MCF 10A (cell line): ENCODE measurements at regions of chr17 and their contacts with region 1.

Region 1: GRCh38 chr17:42773290-42774035 is at the start of gene VPS25:
- DNase-seq: peak; percentile 84
- H3K4me3 Mint-ChIP-seq: peak within 1 kb of the TSS; percentile 87
- H3K27ac Mint-ChIP-seq: peak within 1 kb of the TSS; percentile 89
- H3K4me1 Mint-ChIP-seq: peaks cover 8% of the 10 kb centered on the region
- H3K27me3 Mint-ChIP-seq: no peaks in the 10 kb centered on the region
- CTCF ChIP-seq: no peak
- total RNA-seq, gene VPS25: 84.3 and 96.0 TPM in 2 replicates

Region 2: GRCh38 chr17:42561908-42562844 is 211.3 kb before region 1 on chr17 and contains the start of gene COASY:
- CTCF ChIA-PET with region 1: no interaction called
- POLR2A ChIA-PET with region 1: no interaction called
- intact Hi-C with region 1: no loop called
- DNase-seq: peak; percentile 97
- H3K4me3 Mint-ChIP-seq: peak within 1 kb of the TSS; percentile 94
- H3K27ac Mint-ChIP-seq: peak within 1 kb of the TSS; percentile 96
- H3K4me1 Mint-ChIP-seq: peaks cover 19% of the 10 kb centered on the region
- H3K27me3 Mint-ChIP-seq: no peaks in the 10 kb centered on the region
- CTCF ChIP-seq: no peak
- total RNA-seq, gene COASY: 82.6 and 89.2 TPM in 2 replicates

Region 3: DNA sequence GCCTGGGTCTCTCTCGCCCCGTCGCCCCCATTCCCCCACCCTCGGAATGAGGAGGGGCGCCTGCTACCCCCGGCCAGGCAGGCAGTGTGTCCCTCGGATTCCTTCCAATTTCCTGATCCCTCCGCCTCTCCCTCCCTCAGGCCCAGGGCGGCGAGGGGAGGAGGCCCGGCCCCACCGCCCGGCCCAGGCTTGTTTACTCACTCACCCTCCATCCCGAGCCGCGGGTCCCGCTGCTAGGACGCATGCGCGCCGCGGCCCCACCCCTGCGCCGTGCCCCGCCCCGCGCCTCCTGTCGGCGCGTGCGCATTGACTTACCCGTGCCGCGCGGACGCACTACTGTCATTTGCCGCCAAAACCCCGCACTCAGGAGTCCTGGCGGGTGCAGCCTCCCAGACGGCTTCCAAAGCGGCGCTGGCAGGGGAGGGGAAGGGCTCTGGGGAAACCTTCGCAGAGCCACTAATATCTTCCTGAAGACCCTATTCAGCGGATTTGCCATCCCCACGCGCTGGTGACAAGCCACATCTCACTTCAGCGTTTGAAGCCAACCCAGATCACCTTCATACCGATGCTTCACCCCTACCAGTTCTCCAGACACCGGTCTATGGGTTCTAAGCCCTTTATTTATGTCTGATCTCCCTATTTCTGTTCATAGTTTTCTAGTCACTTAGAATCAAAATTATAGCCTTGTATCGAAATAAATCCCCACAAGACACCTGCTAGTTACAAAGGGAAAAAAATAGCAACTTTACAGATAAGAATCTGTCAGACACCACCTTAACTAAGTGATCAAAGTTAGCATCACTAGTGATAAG is 28.5 kb before region 1 on chr17 and contains the start of gene EZH1:
- CTCF ChIA-PET with region 1: no interaction called
- POLR2A ChIA-PET with region 1: interaction called, 10 read pairs
- intact Hi-C with region 1: no loop called
- DNase-seq: peak; percentile 90
- H3K4me3 Mint-ChIP-seq: peak within 1 kb of the TSS; percentile 91
- H3K27ac Mint-ChIP-seq: peak within 1 kb of the TSS; percentile 96
- H3K4me1 Mint-ChIP-seq: peaks cover 10% of the 10 kb centered on the region
- H3K27me3 Mint-ChIP-seq: no peaks in the 10 kb centered on the region
- CTCF ChIP-seq: no peak
- total RNA-seq, gene EZH1: 31.1 and 31.7 TPM in 2 replicates

Region 4: DNA sequence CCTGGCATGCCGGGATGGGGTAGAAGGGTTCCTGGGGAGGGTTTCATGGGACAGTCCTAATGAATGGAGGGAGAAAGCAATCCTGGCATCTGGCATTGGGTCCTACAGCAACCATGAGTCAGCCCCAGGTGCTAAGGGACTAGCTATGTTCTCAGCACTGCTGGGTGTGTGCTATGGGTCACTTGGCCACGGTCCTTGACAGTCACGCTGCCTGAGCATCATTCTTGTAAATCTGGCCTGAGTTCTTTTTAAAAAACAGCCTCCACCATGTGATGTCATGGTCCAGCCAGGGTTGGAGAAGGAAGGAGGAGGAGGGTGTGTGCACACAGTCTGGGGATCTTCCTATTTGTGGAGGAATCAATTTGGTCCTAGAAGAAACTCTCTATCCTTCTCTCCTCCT is 18.7 kb before region 1 on chr17:
- CTCF ChIA-PET with region 1: interaction called, 3 read pairs
- POLR2A ChIA-PET with region 1: interaction called, 10 read pairs
- intact Hi-C with region 1: no loop called
- DNase-seq: peak; percentile 42
- H3K4me3 Mint-ChIP-seq: no peak overlapping the region
- H3K27ac Mint-ChIP-seq: no peak overlapping the region
- H3K4me1 Mint-ChIP-seq: peaks cover 7% of the 10 kb centered on the region
- H3K27me3 Mint-ChIP-seq: peaks cover 11% of the 10 kb centered on the region
- CTCF ChIP-seq: no peak

Region 5: DNA sequence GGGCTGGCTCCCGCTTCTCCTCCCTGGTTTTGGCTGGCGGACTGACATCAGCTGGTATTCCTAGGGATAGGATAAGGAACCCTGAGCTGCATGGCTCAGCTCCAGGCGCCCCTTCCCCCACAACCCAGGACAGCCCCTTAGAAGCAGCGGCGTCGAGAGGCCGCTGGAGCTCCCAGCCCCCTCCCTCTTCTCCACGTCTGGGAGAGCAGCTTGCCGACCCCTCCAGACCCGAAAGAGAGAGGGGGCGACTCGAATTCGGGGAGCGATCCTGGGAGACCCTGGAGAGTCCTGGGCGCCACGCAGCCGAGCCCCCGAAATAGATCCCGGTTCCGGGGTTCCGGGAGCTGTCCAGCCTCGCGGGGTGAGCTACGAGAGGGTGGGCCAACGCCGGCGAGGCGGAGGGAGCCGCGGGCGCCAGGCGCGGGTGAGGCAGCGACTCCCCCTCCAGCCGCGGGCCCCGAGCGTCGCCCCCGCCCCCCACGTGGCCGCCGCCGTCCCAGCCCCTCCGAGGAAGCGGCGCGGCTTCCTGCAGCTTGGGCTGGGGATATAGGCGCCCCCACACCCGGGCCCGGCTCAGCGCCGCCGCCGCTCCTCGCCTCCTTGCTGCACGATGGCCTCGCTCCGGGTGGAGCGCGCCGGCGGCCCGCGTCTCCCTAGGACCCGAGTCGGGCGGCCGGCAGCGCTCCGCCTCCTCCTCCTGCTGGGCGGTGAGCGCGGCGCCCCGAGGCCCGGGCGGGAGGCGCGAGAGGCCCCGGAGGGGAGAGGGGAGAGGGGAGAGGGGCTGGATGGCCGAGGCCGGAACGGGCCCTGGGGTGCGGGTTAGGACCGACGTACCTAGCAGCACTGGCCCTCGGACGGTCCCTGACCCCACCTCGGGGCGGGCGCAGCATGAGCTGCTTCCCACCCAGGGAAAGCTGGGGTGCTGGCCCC is 12.5 kb before region 1 on chr17 and contains the start of gene RAMP2:
- CTCF ChIA-PET with region 1: interaction called, 14 read pairs
- POLR2A ChIA-PET with region 1: interaction called, 10 read pairs
- intact Hi-C with region 1: no loop called
- DNase-seq: no peak
- H3K4me3 Mint-ChIP-seq: no peak within 1 kb of the TSS
- H3K27ac Mint-ChIP-seq: no peak within 1 kb of the TSS
- H3K4me1 Mint-ChIP-seq: peaks cover 5% of the 10 kb centered on the region
- H3K27me3 Mint-ChIP-seq: peaks cover 20% of the 10 kb centered on the region
- CTCF ChIP-seq: no peak
- total RNA-seq, gene RAMP2: not detected in 2 replicates

Region 6: DNA sequence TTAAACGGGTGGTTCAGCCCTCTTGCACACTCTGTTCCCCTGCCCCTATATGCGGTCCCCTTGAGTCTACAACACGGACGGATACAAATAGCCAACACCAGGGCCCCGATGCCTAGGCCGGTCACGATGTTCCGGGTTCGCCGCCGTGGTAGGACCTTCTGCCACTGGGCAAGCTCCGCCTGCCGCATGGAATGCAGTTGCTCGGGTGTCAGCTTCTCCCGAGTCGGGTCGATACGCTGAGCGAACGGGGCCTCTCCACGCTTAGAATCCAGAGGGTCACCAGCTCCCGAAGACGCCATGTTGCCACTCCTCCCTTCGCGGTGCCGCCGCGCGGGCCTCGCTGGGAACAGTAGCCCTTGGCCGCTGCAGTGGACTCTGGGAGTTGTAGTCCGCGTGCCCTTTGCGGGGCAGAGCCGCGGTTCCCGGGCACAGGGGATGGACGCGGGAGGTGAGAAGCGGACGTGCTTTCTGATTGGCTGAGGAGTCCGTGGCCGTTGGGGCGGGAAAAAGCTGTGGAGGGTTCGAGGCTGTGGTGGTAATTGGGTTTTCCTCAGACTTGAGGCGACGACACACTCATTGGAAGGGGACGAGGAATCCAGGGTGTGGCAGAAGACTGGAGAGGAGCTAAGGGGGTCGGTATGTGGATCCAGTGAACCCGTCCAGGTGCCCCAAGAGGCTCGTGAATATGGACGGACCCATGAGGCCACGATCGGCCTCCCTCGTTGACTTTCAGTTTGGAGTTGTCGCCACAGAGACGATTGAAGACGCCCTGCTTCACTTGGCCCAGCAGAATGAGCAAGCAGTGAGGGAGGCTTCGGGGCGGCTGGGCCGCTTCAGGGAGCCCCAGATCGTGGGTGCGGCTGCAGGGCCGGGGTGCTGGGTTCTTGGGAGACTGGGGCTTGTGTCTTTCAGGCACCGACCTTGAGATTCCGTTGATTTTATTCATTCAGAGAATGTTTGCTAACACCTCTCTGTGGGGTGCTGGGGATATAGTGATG is 25.2 kb after region 1 on chr17 and contains the starts of genes CNTD1 and COA3:
- CTCF ChIA-PET with region 1: no interaction called
- POLR2A ChIA-PET with region 1: interaction called, 19 read pairs
- intact Hi-C with region 1: no loop called
- DNase-seq: peak; percentile 86
- H3K4me3 Mint-ChIP-seq: peak within 1 kb of the TSS; percentile 83
- H3K27ac Mint-ChIP-seq: peak within 1 kb of the TSS; percentile 87
- H3K4me1 Mint-ChIP-seq: peaks cover 17% of the 10 kb centered on the region
- H3K27me3 Mint-ChIP-seq: no peaks in the 10 kb centered on the region
- CTCF ChIP-seq: no peak
- total RNA-seq, gene CNTD1: not detected in 2 replicates
- total RNA-seq, gene COA3: 41.0 and 52.7 TPM in 2 replicates

Region 7: GRCh38 chr17:42832974-42833766 is 59.7 kb after region 1 on chr17 and contains the start of gene PSME3:
- CTCF ChIA-PET with region 1: no interaction called
- POLR2A ChIA-PET with region 1: interaction called, 23 read pairs
- intact Hi-C with region 1: no loop called
- DNase-seq: peak; percentile 87
- H3K4me3 Mint-ChIP-seq: peak within 1 kb of the TSS; percentile 96
- H3K27ac Mint-ChIP-seq: peak within 1 kb of the TSS; percentile 99
- H3K4me1 Mint-ChIP-seq: peaks cover 25% of the 10 kb centered on the region
- H3K27me3 Mint-ChIP-seq: no peaks in the 10 kb centered on the region
- CTCF ChIP-seq: no peak
- total RNA-seq, gene PSME3: 220 and 232 TPM in 2 replicates

Region 8: DNA sequence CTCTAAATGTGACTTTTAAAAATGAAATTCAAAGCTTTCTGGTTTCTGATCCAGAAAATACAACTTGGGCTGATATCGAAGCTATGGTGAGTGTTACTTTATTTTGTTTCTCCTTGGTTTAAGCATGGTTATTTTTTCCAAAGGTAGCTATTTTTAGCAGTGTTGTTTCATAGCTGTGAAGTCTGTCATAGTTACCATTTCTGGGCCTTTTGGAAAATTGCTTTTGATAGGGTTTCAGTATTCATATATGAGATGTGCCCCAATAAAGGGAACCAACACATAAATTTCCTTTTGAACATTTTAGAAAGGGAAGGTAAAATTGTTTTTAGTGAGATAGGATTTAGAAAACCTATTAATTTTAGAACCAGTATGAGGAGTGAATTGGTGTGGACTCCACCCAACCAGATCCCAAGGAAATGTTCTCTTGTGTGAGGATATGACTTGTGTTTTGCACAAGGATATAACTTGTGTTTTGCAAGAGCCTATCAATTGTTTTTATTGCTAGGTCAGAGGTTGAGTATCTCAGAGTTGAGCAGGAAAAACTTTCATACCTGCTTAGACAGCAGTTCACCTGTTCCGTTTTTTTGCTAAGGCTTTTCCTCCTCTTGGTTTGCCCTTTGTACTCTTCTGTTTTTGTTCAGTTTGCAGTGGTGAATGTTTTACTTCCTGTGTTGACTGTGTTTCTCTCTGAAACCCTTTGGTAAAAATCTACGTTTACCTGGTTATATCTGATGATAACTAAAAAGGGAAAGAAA is 402.5 kb after region 1 on chr17:
- CTCF ChIA-PET with region 1: no interaction called
- POLR2A ChIA-PET with region 1: no interaction called
- intact Hi-C with region 1: no loop called
- DNase-seq: no peak
- H3K4me3 Mint-ChIP-seq: no peak overlapping the region
- H3K27ac Mint-ChIP-seq: no peak overlapping the region
- H3K4me1 Mint-ChIP-seq: peaks cover 11% of the 10 kb centered on the region
- H3K27me3 Mint-ChIP-seq: no peaks in the 10 kb centered on the region
- CTCF ChIP-seq: no peak